OCI-LY7 (cell line): ENCODE measurements at regions of chr7 and their contacts with region 1.

Region 1: DNA sequence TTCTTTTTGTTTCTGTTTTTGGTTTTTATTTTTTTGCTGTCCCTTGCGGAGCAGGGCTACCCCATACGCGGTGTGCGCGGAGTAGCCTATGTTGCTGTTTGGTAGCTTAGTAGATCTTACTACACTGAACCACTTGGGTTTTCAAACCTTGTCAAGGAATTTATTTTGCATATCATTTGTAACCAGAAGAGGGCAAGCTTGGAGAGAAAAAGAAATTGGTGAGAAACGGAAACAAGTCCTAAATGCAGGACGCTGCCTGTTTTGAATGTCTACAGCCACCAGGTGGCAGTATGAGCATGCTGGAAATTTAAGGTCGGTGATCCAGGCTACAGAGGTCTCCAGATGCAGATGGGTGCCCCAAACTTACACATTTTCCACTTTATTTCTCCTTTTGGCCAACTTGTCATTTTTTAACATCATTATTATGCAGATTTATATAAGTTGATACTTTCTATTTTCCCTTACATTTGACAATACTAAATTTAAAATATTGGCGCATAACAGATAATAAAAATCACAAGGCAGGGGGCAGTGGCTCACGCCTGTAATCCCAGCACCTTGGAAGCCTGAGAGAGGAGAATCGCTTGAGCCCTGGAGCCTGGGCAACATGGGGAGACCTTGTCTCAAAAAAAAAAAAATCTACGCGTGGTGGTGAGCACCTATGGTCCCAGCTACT is 15.3 kb upstream of the TRA2A start:
- DNase-seq: peak; percentile 89
- H3K4me3 ChIP-seq: no peak overlapping the region
- H3K27ac ChIP-seq: no peak overlapping the region
- H3K4me1 ChIP-seq: peaks cover 18% of the 10 kb centered on the region
- CTCF ChIP-seq: peak; percentile 98

Region 2: GRCh38 chr7:22885797-22886261 is 661.2 kb before region 1 on chr7:
- CTCF ChIA-PET with region 1: no interaction called
- POLR2A ChIA-PET with region 1: no interaction called
- intact Hi-C with region 1: no loop called
- DNase-seq: peak; percentile 92
- H3K4me3 ChIP-seq: peak overlapping the region; percentile 30
- H3K27ac ChIP-seq: peak overlapping the region; percentile 39
- H3K4me1 ChIP-seq: peaks cover 18% of the 10 kb centered on the region
- CTCF ChIP-seq: no peak

Region 3: GRCh38 chr7:23273141-23273599 is 273.9 kb before region 1 on chr7:
- CTCF ChIA-PET with region 1: no interaction called
- POLR2A ChIA-PET with region 1: no interaction called
- intact Hi-C with region 1: loop called (anchors 2 kb)
- DNase-seq: peak; percentile 93
- H3K4me3 ChIP-seq: peak overlapping the region; percentile 57
- H3K27ac ChIP-seq: peak overlapping the region; percentile 7
- H3K4me1 ChIP-seq: peaks cover 15% of the 10 kb centered on the region
- CTCF ChIP-seq: peak; percentile 95

Region 4: GRCh38 chr7:23570592-23571200 is 23.7 kb after region 1 on chr7:
- CTCF ChIA-PET with region 1: no interaction called
- POLR2A ChIA-PET with region 1: no interaction called
- intact Hi-C with region 1: loop called (anchors 2 kb)
- DNase-seq: peak; percentile 71
- H3K4me3 ChIP-seq: no peak overlapping the region
- H3K27ac ChIP-seq: no peak overlapping the region
- H3K4me1 ChIP-seq: no peaks in the 10 kb centered on the region
- CTCF ChIP-seq: peak; percentile 94

Region 5: DNA sequence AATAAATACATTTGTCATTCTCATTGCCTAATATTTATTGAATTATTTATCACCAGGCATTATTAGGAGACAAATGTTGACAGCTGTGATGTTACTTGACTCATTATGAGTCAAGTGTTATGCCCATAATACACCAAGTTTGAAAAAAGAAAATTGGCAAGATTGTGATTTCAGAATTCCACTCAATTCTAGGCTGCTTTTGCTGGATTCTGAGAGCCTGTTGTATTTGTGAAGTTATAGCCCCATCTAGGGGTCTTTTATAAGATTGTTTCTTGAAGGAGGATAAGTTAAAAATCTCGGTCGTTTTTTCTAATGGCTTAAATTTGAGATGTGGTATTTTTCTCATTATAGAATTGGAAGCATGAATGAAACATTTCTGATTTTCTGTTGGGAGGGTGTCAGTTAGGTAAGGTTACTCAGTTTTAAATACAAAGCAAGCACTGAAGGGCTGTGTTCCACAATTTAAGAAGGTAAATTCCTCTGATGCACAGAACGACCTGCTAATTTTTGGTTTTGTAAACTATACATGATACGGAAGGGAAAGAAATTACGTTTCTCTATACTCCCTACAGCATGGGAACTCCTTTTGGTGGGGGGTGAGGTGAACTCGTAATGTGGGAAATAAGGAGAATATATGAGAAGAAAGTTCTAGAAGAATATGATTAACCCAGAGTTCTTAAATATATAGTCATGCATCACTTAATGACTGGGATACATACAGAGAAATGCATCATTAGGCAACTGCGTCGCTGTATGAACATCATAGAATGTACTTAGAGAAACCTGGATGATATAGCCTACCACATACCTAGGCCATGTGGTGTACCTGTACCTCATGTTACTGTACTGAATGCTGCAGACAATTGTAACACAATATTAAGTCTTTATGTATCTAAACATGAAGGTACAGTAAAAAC is 165.6 kb after region 1 on chr7:
- CTCF ChIA-PET with region 1: no interaction called
- POLR2A ChIA-PET with region 1: interaction called, 3 read pairs
- intact Hi-C with region 1: loop called (anchors 1 kb)
- DNase-seq: peak; percentile 67
- H3K4me3 ChIP-seq: no peak overlapping the region
- H3K27ac ChIP-seq: no peak overlapping the region
- H3K4me1 ChIP-seq: no peaks in the 10 kb centered on the region
- CTCF ChIP-seq: peak; percentile 90